H1 (cell line): ENCODE measurements at regions of chr20 and their contacts with region 1.

Region 1: GRCh38 chr20:41161886-41162285 is 24.5 kb downstream of the PLCG1 start:
- DNase-seq: no peak
- H3K4me3 ChIP-seq: no peak overlapping the region
- H3K27ac ChIP-seq: no peak overlapping the region
- H3K4me1 ChIP-seq: peaks cover 0 to 4% (median 1%) of the 10 kb centered on the region in 4 experiments; a peak in 3 of 7 replicates
- H3K27me3 ChIP-seq: no peaks in the 10 kb centered on the region
- CTCF ChIP-seq: no peak
- EP300 ChIP-seq: no peak
- POLR2A ChIP-seq: no peak
- RAD21 ChIP-seq: no peak

Region 2: GRCh38 chr20:41047975-41048305 is 113.9 kb before region 1 on chr20:
- CTCF ChIA-PET with region 1: no interaction called
- POLR2A ChIA-PET with region 1: no interaction called
- DNase-seq: no peak
- H3K4me3 ChIP-seq: peak overlapping the region in 1 of 4 experiments; percentile 3; a peak in 1 of 8 replicates
- H3K27ac ChIP-seq: no peak overlapping the region
- H3K4me1 ChIP-seq: peaks cover 5 to 21% (median 9%) of the 10 kb centered on the region in 4 experiments; a peak in 4 of 7 replicates
- H3K27me3 ChIP-seq: no peaks in the 10 kb centered on the region
- CTCF ChIP-seq: no peak
- EP300 ChIP-seq: no peak
- POLR2A ChIP-seq: no peak
- RAD21 ChIP-seq: no peak

Region 3: DNA sequence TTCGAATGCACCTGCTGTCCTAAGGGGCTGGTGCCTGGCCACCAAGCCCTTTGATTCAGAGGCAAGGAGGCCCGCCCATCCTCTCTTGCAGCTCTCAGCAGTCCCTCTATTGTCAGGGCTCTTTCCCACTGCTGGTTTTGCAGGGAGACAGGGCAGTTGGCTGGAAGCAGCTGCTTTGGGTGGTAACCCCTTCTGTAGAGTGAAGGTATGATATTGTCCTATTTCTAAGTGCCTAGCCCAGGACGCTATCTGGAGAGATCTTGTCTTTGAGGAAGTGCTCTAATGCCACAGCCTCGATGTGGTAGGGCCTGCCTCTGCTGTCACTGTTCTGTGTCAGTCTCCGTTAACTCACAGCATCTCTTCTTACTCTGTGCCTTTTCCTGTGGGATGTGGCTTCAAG is 19.0 kb before region 1 on chr20:
- CTCF ChIA-PET with region 1: interaction called, 4 read pairs
- POLR2A ChIA-PET with region 1: interaction called, 13 read pairs
- DNase-seq: no peak
- H3K4me3 ChIP-seq: no peak overlapping the region
- H3K27ac ChIP-seq: no peak overlapping the region
- H3K4me1 ChIP-seq: peaks cover 14 to 41% (median 27%) of the 10 kb centered on the region in 4 experiments
- H3K27me3 ChIP-seq: no peaks in the 10 kb centered on the region
- CTCF ChIP-seq: no peak
- EP300 ChIP-seq: no peak
- POLR2A ChIP-seq: no peak
- RAD21 ChIP-seq: no peak

Region 4: DNA sequence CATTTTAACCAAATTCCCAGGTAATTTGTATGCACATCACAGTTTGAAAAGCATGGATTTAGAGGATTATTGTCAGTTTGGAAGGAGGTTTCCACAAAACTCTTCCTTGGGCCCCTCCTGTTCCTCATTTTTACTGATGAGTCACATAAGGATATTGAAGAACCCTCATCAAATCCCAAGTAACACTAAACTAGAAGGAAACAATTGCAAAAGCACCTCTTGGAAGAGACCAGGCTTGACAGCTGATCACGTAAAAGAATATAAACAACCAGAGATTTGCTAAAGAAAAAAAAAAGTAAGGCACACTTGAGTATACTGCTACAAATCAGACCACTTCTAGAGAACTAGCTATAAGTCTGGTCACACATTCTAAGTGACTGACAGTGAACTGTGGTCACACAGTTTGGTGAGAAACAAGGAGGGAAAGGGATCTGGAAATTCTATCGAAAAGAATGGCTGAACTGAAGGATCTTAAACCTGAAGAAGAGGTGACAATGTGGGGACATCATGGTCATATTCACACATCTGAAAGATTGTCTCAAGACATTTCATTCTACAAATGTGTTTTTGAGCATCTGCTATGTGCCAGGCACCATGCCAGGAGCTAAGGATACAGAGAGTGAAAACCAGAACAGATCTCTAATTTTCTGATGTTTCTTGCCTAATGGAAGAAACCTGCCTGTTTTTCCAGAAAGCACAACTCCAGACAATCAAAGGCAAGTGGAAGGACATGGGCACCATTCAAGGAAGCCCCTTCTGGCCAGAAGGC is 131.6 kb after region 1 on chr20:
- CTCF ChIA-PET with region 1: no interaction called
- POLR2A ChIA-PET with region 1: no interaction called
- DNase-seq: no peak
- H3K4me3 ChIP-seq: no peak overlapping the region
- H3K27ac ChIP-seq: no peak overlapping the region
- H3K4me1 ChIP-seq: peaks cover 0 to 3% (median 2%) of the 10 kb centered on the region in 4 experiments; a peak in 2 of 7 replicates
- H3K27me3 ChIP-seq: no peaks in the 10 kb centered on the region
- CTCF ChIP-seq: no peak
- EP300 ChIP-seq: no peak
- POLR2A ChIP-seq: no peak
- RAD21 ChIP-seq: no peak